HAP-1 (cell line): ENCODE measurements at regions of chrX and their contacts with region 1.

Region 1: GRCh38 chrX:69546417-69546816 is 42.3 kb downstream of the NALF2 start:
- DNase-seq: no peak
- H3K4me3 ChIP-seq: no peak overlapping the region
- H3K4me1 ChIP-seq: no peaks in the 10 kb centered on the region
- H3K27me3 ChIP-seq: no peaks in the 10 kb centered on the region

Region 2: GRCh38 chrX:70030301-70030767 is 483.9 kb after region 1 on chrX:
- in situ Hi-C with region 1: loop called (anchors 10 kb)
- DNase-seq: peak; percentile 59 to 77
- H3K4me3 ChIP-seq: no peak overlapping the region
- H3K4me1 ChIP-seq: no peaks in the 10 kb centered on the region; the same call in 1 of the 2 replicates
- H3K27me3 ChIP-seq: no peaks in the 10 kb centered on the region

Region 3: GRCh38 chrX:70096052-70096451 is 549.6 kb after region 1 on chrX:
- in situ Hi-C with region 1: loop called (anchors 10 kb)
- DNase-seq: no peak
- H3K4me3 ChIP-seq: no peak overlapping the region
- H3K4me1 ChIP-seq: no peaks in the 10 kb centered on the region
- H3K27me3 ChIP-seq: peaks cover 4% of the 10 kb centered on the region; the same call in 1 of the 2 replicates